ENCODE measurements at regions of chr19 and their contacts with region 1.

Region 1: GRCh38 chr19:54418030-54418929 is 3.0 kb downstream of the TTYH1 start:
- DNase-seq: peak; percentile 75
- ATAC-seq: peak; percentile 82
- H3K4me3 Mint-ChIP-seq: peak overlapping the region; percentile 57
- H3K27ac Mint-ChIP-seq: peak overlapping the region; percentile 84
- H3K4me1 Mint-ChIP-seq: peaks cover 16% of the 10 kb centered on the region
- H3K27me3 Mint-ChIP-seq: peaks cover 26% of the 10 kb centered on the region

Region 2: GRCh38 chr19:54266133-54266532 is 152.1 kb before region 1 on chr19:
- CTCF ChIA-PET with region 1: interaction called, 10 read pairs
- POLR2A ChIA-PET with region 1: no interaction called
- DNase-seq: peak; percentile 84
- ATAC-seq: peak; percentile 85
- H3K4me3 Mint-ChIP-seq: no peak overlapping the region
- H3K27ac Mint-ChIP-seq: no peak overlapping the region
- H3K4me1 Mint-ChIP-seq: no peaks in the 10 kb centered on the region
- H3K27me3 Mint-ChIP-seq: peaks cover 21% of the 10 kb centered on the region

Measured in activated CD8-positive, alpha-beta T cell treated with anti-CD3 and anti-CD28 coated beads, Interleukin-2, amount 10 ng/mL, durations not matched to agents 7 days and 5 days (primary cell).